ENCODE measurements at regions of chr6 and their contacts with region 1.

Region 1: GRCh38 chr6:4864519-4864918 is 88.3 kb downstream of the CDYL start:
- DNase-seq: no peak
- ATAC-seq: no peak
- H3K4me3 ChIP-seq: no peak overlapping the region
- H3K27ac ChIP-seq: no peak overlapping the region
- H3K4me1 ChIP-seq: no peaks in the 10 kb centered on the region
- H3K27me3 ChIP-seq: no peaks in the 10 kb centered on the region
- CTCF ChIP-seq: no peak
- EP300 ChIP-seq: no peak
- POLR2A ChIP-seq: no peak
- RAD21 ChIP-seq: no peak

Region 2: GRCh38 chr6:3294921-3295871 is 1569.3 kb before region 1 on chr6:
- CTCF ChIA-PET with region 1: no interaction called
- POLR2A ChIA-PET with region 1: no interaction called
- in situ Hi-C with region 1: no loop called
- intact Hi-C with region 1: loop called (anchors 5 kb)
- DNase-seq: peak; percentile 25
- ATAC-seq: peak; percentile 72
- H3K4me3 ChIP-seq: no peak overlapping the region
- H3K27ac ChIP-seq: no peak overlapping the region
- H3K4me1 ChIP-seq: peaks cover 11% of the 10 kb centered on the region
- H3K27me3 ChIP-seq: no peaks in the 10 kb centered on the region
- CTCF ChIP-seq: peak; percentile 70
- EP300 ChIP-seq: no peak
- POLR2A ChIP-seq: no peak
- RAD21 ChIP-seq: peak; percentile 53; the same call in 1 of the 2 replicates

Region 3: DNA sequence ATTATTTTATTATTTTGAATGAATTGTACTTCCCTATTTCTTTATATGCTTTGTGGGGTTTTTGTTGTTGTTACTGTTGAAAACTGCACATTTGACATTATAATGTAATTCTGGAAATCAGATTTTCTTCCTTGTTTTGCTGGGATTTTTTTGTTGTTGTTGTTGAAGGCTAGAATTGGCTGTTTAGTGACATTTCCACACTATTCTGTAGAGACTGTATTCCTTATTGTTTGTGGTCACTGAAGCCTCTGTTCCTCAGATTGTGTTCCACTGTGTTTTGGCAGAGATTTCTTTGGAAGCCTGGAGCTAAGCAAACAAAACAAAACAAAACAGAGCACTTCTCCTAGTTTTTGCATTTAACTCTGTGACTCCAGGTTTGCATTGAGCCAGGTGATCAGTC is 35.4 kb before region 1 on chr6:
- CTCF ChIA-PET with region 1: no interaction called
- POLR2A ChIA-PET with region 1: no interaction called
- in situ Hi-C with region 1: no loop called
- intact Hi-C with region 1: no loop called
- DNase-seq: no peak
- ATAC-seq: no peak
- H3K4me3 ChIP-seq: no peak overlapping the region
- H3K27ac ChIP-seq: no peak overlapping the region
- H3K4me1 ChIP-seq: peaks cover 6% of the 10 kb centered on the region; the same call in 1 of the 2 replicates
- H3K27me3 ChIP-seq: no peaks in the 10 kb centered on the region
- CTCF ChIP-seq: no peak
- EP300 ChIP-seq: no peak
- POLR2A ChIP-seq: no peak
- RAD21 ChIP-seq: no peak

Region 4: DNA sequence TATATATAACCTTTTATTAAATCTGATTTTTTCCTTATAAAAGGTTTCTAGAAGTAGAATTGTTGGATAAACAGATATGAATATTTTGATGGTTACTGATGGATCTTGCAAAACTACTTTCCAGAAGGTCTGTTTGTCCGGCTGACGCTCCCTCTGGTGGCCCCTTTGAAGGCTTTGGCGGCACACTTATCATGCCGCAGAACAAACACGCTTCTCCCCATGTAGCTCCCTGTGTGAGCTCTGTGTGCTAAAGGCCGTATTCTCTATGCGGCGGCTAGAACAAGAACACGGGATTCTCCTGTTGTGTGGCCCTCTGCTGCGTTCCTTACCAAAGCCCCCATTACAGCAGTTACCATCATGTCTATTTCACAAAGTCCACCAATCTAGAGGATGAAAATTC is 250.6 kb after region 1 on chr6:
- CTCF ChIA-PET with region 1: no interaction called
- POLR2A ChIA-PET with region 1: no interaction called
- in situ Hi-C with region 1: no loop called
- intact Hi-C with region 1: no loop called
- DNase-seq: peak; percentile 91
- ATAC-seq: peak; percentile 94
- H3K4me3 ChIP-seq: no peak overlapping the region
- H3K27ac ChIP-seq: peak overlapping the region; percentile 10
- H3K4me1 ChIP-seq: peaks cover 39% of the 10 kb centered on the region
- H3K27me3 ChIP-seq: no peaks in the 10 kb centered on the region
- CTCF ChIP-seq: peak; percentile 88
- EP300 ChIP-seq: peak in 1 of 2 experiments; percentile 75; a peak in 2 of 4 replicates
- POLR2A ChIP-seq: no peak
- RAD21 ChIP-seq: peak; percentile 88